GM10248 (cell line): ENCODE measurements at regions of chr3 and their contacts with region 1.

Region 1: DNA sequence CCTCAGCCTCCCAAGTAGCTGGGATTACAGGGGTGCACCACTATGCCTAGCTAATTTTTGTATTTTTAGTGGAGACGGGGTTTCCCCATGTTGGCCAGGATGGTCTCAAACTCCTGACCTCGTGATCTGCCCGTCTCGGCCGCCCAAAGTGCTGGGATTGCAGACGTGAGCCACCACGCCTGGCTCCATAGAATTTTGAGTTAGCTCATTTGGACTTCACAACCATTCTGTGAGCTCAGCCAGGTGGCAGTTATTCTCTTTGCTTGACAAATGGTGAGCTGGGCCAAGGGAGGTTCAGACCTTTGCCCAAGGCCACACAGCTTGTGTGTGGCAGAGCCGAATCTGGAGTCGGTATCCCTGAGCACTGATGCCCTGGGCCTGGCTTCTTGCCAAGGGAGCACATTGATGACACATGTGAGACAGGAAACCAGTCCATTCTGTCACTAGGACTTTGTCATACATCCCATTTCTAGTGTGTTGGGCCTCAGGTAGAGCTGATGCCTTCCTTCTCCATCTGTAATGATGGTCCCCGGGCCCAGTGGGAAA is 17.6 kb downstream of the PODXL2 start:
- DNase-seq: no peak
- CTCF ChIP-seq: no peak

Region 2: GRCh38 chr3:127628788-127629466 is 17.6 kb before region 1 on chr3 and contains the start of gene PODXL2:
- CTCF ChIA-PET with region 1: interaction called, 11 read pairs
- POLR2A ChIA-PET with region 1: no interaction called
- DNase-seq: peak; percentile 79
- CTCF ChIP-seq: no peak

Region 3: DNA sequence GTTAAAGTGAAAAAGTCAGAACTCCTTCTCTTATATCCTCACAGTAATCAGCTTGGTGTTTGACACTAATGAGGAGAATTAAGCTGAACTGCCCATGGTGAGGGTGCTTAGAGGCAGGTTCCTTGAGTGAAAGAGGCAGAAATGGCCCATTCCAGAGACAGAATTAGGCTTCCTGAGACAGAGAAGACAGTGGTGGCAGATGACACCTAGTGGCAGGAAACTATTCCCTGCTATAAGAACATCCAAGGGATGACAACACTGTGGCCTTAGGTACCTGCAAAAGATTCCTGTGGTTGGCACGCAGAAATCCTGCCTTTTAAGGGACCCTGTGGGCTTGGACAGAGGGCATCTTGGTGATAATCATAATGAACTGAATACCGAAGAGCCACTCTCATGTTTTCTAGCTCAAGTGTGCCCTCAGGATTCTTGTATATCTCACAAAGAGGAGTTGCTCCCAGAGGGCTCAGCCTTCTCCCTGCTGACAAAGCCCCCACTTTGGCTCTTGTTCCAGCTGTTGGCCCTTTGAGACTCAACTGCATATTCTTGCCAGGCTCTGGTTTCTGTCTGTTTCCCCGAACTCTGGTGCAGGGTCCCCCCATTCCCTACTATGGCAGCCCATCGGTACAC is 324.5 kb after region 1 on chr3:
- CTCF ChIA-PET with region 1: interaction called, 13 read pairs
- POLR2A ChIA-PET with region 1: no interaction called
- DNase-seq: peak; percentile 56
- CTCF ChIP-seq: peak; percentile 74